Colonic mucosa (tissue), 4 donors: ENCODE measurements at regions of chr7 and their contacts with region 1.

Region 1: DNA sequence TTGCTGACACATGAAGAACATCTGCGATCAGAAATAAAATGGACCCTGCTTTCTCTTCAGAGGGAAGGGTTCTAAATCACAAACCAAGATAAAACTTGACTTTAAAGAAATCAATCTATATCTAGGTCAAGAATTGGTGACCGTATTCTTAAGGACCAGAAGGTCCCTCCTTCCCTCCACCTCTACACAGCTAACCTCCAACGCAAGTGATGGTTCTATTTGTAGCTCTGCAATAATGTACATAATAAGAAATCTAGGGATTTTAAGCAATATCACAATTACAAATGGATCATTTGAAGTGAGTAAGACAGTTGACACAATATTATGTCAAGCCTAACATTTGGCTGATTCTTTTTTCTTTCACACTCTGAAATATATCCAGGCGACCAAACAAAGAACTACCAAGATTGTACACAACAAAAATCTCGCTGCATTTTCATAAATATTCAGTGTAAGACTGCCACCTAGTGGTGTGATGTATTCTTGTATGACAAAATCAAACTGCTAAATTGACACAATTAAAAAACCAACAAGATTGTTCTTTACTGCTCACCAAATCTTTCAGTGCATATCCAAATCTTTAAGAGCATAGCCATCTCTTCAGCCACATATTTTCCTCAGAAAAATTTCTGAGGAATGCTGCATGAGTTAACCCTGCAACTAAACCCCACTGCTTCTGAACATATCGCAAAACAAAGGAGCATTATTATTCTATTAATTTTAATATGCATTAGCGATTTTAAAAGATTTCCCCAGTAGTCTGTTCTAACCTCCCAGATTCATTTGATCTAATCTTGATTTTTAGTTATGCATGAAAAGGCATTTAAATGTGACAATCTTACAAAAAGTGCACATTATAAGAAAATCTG is 44.5 kb downstream of the ICA1 start:
- DNase-seq: peak; percentile 32
- H3K4me3 ChIP-seq: no peak overlapping the region
- H3K27ac ChIP-seq: no peak overlapping the region
- H3K4me1 ChIP-seq: no peaks in the 10 kb centered on the region
- H3K27me3 ChIP-seq: no peaks in the 10 kb centered on the region
- CTCF ChIP-seq: peak; percentile 61

Region 2: GRCh38 chr7:7489546-7489945 is 727.9 kb before region 1 on chr7:
- intact Hi-C with region 1: no loop called
- DNase-seq: no peak
- H3K4me3 ChIP-seq: no peak overlapping the region
- H3K27ac ChIP-seq: no peak overlapping the region
- H3K4me1 ChIP-seq: no peaks in the 10 kb centered on the region
- H3K27me3 ChIP-seq: no peaks in the 10 kb centered on the region
- CTCF ChIP-seq: no peak

Region 3: GRCh38 chr7:7595451-7595850 is 622.0 kb before region 1 on chr7:
- intact Hi-C with region 1: loop called (anchors 10 kb)
- DNase-seq: no peak
- H3K4me3 ChIP-seq: no peak overlapping the region
- H3K27ac ChIP-seq: no peak overlapping the region
- H3K4me1 ChIP-seq: no peaks in the 10 kb centered on the region
- H3K27me3 ChIP-seq: no peaks in the 10 kb centered on the region
- CTCF ChIP-seq: no peak

Region 4: GRCh38 chr7:8295638-8296361 is 78.4 kb after region 1 on chr7:
- intact Hi-C with region 1: loop called (anchors 5 kb)
- DNase-seq: peak; percentile 51
- H3K4me3 ChIP-seq: no peak overlapping the region
- H3K27ac ChIP-seq: no peak overlapping the region
- H3K4me1 ChIP-seq: no peaks in the 10 kb centered on the region
- H3K27me3 ChIP-seq: no peaks in the 10 kb centered on the region
- CTCF ChIP-seq: peak; percentile 59

Region 5: GRCh38 chr7:8343556-8343955 is 126.1 kb after region 1 on chr7:
- intact Hi-C with region 1: no loop called
- DNase-seq: no peak
- H3K4me3 ChIP-seq: no peak overlapping the region
- H3K27ac ChIP-seq: no peak overlapping the region
- H3K4me1 ChIP-seq: no peaks in the 10 kb centered on the region
- H3K27me3 ChIP-seq: no peaks in the 10 kb centered on the region
- CTCF ChIP-seq: no peak